AG04450 (cell line): ENCODE measurements at regions of chr1 and their contacts with region 1.

Region 1: DNA sequence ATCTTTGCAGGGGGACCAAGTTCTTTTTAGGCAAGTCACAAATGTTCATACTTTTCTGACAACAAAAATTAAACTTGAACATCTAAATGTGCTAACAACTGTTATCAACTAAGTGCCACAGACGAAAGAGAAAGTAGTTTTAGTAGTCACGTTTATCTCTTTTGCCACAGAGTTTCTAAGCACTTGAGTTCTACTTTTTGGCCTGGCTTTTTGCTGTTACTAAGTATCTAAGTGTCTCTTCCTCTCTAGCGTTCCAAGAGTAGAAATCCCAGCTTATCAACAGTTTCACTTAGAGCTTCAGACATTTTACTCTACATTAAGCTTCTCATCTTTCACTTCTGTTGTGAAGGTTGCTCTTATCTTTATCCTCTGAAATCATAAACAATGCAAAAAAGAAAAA is 34.2 kb downstream of the GATAD2B start:
- DNase-seq: no peak
- H3K4me3 ChIP-seq: no peak overlapping the region
- H3K27ac ChIP-seq: no peak overlapping the region
- H3K27me3 ChIP-seq: no peaks in the 10 kb centered on the region
- CTCF ChIP-seq: no peak

Region 2: DNA sequence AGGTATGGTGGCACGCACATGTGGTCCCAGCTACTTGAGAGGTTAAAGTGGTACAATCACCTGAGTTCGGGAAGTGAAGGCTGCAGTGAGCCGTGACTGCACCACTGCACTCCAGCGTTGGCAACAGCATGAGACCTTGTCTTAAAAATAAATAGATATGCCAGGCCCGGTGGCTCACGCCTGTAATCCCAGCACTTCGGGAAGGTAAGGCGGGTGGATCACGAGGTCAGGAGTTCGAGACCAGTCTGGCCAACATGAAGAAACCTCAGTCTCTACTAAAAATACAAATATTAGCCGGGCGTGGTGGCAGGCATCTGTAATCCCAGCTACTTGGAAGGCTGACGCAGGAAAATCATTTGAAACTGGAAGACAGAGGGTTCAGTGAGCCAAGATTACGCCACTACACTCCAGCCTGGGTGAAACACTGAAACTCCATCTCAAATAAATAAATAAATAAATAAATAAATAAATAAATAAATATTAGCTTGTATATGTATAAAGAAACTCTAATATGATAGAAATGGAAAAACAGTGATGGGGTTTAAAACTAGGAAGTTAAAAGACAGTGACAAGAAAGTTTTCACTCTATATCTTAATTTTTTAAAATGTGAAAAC is 15.4 kb after region 1 on chr1:
- CTCF ChIA-PET with region 1: no interaction called
- POLR2A ChIA-PET with region 1: interaction called, 10 read pairs
- DNase-seq: no peak
- H3K4me3 ChIP-seq: no peak overlapping the region
- H3K27ac ChIP-seq: no peak overlapping the region
- H3K27me3 ChIP-seq: no peaks in the 10 kb centered on the region
- CTCF ChIP-seq: no peak